GM10248 (cell line): ENCODE measurements at regions of chr1 and their contacts with region 1.

Region 1: GRCh38 chr1:215119719-215120365 is 37.3 kb downstream of the KCNK2 start:
- DNase-seq: no peak
- CTCF ChIP-seq: no peak

Region 2: DNA sequence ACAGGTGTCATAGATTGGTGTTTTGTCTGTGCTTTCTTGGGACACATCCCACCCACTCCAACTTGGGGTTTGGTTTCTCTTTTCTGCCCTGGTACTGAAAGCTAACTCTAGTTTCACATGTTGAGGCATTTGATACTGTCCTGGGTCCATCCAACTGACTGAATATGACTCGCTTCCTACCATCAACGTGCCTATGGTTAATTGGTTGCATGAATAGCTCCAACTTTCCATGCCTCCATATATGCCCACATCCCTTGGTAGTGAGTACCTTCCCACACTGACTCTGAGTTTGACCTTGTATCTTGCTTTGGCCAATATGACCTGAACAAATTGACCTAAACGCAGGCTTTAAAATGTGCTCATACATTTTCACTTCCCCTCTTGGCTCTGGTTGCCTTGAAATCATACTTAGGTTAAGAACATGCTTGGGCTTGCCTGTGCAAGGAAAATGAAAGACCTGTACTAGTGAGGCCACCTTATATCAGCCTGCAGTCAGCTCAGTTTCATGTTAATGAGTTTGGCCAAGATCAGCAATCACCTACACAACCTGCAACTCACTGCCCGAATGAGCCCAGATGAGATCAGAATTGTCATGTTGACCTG is 118.3 kb before region 1 on chr1:
- CTCF ChIA-PET with region 1: no interaction called
- POLR2A ChIA-PET with region 1: no interaction called
- DNase-seq: peak; percentile 35
- CTCF ChIP-seq: no peak

Region 3: GRCh38 chr1:215032911-215033526 is 86.8 kb before region 1 on chr1:
- CTCF ChIA-PET with region 1: no interaction called
- POLR2A ChIA-PET with region 1: no interaction called
- DNase-seq: no peak
- CTCF ChIP-seq: no peak

Region 4: GRCh38 chr1:215133532-215133931 is 13.7 kb after region 1 on chr1:
- CTCF ChIA-PET with region 1: interaction called, 11 read pairs
- POLR2A ChIA-PET with region 1: no interaction called
- DNase-seq: no peak
- CTCF ChIP-seq: no peak

Region 5: DNA sequence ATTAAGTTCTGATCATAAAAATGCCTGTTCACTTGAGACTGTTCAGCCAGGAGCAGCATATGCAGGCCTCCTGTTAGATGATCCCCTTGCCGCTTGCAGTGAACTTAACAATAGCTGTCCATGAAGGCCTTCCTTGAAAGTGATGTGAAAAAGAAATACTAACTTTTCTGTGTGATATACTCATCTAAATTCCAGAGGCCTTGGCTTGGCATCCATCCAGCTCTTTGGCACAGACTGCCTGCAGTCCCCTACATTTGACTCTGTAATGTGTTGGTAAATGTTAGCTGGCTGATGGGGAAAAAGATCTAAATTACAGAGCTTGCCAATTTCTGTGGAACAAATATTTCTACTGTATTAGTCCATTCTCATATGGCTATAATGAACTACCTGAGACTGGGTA is 36.4 kb after region 1 on chr1:
- CTCF ChIA-PET with region 1: no interaction called
- POLR2A ChIA-PET with region 1: no interaction called
- DNase-seq: no peak
- CTCF ChIP-seq: no peak